ENCODE measurements at regions of chr20 and their contacts with region 1.

Region 1: DNA sequence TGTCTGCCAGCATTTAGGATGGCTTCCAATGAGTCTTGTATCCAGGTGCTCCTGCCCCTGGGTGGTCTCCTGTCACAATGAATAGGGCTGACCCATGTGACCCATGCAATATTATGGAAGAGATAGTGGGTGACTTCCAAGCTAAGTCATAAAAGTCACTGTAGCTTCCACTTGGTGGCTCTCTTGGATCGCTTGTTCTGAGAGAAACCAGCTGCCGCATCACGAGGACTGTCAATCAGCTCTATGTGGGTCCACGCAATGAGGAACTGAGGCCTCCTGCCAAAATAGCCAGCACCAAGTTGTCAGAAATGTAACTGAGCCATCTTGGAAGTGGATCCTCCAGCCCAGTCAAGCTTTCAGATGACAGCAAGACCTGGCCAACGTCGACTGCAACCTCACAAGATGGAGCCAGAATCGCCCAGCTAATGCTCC is 14.9 kb upstream of the MATN4 start:
- DNase-seq: peak; percentile 86
- ATAC-seq: peak; percentile 85
- H3K4me3 ChIP-seq: peak overlapping the region in 1 of 3 experiments; percentile 13; a peak in 1 of 6 replicates
- H3K27ac ChIP-seq: no peak overlapping the region
- H3K4me1 ChIP-seq: no peaks in the 10 kb centered on the region
- H3K27me3 ChIP-seq: peaks cover 2 to 7% of the 10 kb centered on the region in 2 experiments; a peak in 1 of 5 replicates
- CTCF ChIP-seq: peak; percentile 99
- EP300 ChIP-seq: no peak
- POLR2A ChIP-seq: no peak
- RAD21 ChIP-seq: peak; percentile 98

Region 2: DNA sequence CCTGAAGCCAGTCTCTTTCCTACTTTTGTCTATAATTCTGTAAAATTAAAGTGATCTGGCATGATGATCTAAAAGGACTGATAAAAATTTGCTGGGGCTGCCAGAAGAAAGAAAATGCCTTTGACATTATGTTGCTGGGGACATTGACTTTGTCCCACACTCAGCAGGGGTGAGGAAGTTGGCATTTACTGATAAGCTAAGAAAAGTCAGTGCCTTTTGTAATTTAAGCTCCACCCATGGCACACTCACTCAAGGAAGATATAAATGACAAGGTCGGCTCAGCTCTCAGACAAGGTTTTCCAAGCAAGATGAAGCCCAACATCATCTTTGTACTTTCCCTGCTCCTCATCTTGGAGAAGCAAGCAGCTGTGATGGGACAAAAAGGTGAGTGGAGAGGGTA is 116.2 kb before region 1 on chr20 and contains the start of gene SEMG1:
- CTCF ChIA-PET with region 1: no interaction called
- POLR2A ChIA-PET with region 1: no interaction called
- in situ Hi-C with region 1: no loop called
- intact Hi-C with region 1: no loop called
- DNase-seq: no peak
- ATAC-seq: no peak
- H3K4me3 ChIP-seq: no peak within 1 kb of the TSS
- H3K27ac ChIP-seq: no peak within 1 kb of the TSS
- H3K4me1 ChIP-seq: no peaks in the 10 kb centered on the region
- H3K27me3 ChIP-seq: 0 out of 5 replicates have a peak, but pooled peaks cover 0 to 6% of the 10 kb centered on the region in 2 experiments
- CTCF ChIP-seq: no peak
- EP300 ChIP-seq: no peak
- POLR2A ChIP-seq: no peak
- RAD21 ChIP-seq: no peak
- total RNA-seq, gene SEMG1: not detected in 2 replicates

Region 3: GRCh38 chr20:45347936-45348778 is 25.2 kb after region 1 on chr20 and contains the start of gene SDC4:
- CTCF ChIA-PET with region 1: no interaction called
- POLR2A ChIA-PET with region 1: interaction called, 74 read pairs
- in situ Hi-C with region 1: no loop called
- intact Hi-C with region 1: no loop called
- DNase-seq: no peak
- ATAC-seq: peak; percentile 55
- H3K4me3 ChIP-seq: peak within 1 kb of the TSS; percentile 79 to 87 (median 87)
- H3K27ac ChIP-seq: peak within 1 kb of the TSS; percentile 53
- H3K4me1 ChIP-seq: peaks cover 69% of the 10 kb centered on the region
- H3K27me3 ChIP-seq: peaks cover 1 to 11% of the 10 kb centered on the region in 2 experiments; a peak in 2 of 5 replicates
- CTCF ChIP-seq: no peak
- EP300 ChIP-seq: no peak
- POLR2A ChIP-seq: peak; percentile 96 to 99
- RAD21 ChIP-seq: peak; percentile 44; the same call in 1 of the 2 replicates
- total RNA-seq, gene SDC4: 36.0 and 65.1 TPM in 2 replicates

Region 4: DNA sequence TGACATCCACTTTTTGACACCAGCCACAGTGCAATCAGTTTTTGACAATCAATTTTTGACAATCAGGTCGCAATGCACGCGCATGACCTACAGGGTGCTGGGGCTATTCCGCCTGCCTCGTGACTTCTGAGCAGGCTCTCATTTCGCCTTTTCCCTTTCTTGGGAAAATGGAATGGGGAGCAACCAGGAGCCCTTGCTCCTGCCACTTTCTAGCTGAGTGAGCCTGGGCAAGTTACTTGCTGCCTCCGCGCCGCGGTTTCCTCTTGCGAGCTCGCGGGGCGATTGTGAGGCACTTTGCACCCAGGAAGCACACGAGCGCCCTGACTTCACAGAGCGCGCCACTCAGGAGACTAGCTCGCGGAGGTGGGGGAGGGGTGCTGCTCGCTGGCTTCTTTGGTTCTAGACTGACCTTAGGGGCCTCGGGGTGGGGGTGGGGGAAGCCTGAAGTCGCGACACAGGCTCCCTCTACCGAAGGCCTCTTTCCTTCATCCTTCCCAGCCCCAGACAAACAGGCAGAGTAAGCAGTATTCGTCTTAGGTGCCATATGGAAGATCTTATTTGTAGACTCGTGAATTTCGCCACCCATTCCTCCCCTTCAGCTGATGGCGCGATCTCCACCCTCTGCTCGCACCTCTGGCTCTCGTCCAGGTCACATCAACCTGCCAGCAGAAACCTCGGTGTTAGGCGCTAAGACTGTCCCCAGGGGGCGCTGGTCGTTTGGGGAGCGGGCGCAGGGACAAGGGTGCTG is 50.6 kb after region 1 on chr20:
- CTCF ChIA-PET with region 1: interaction called, 7 read pairs
- POLR2A ChIA-PET with region 1: interaction called, 10 read pairs
- in situ Hi-C with region 1: no loop called
- intact Hi-C with region 1: no loop called
- DNase-seq: peak; percentile 83
- ATAC-seq: peak; percentile 91
- H3K4me3 ChIP-seq: peak overlapping the region in 2 of 3 experiments; percentile 12 to 29; a peak in 2 of 6 replicates
- H3K27ac ChIP-seq: no peak overlapping the region
- H3K4me1 ChIP-seq: peaks cover 19% of the 10 kb centered on the region
- H3K27me3 ChIP-seq: no peaks in the 10 kb centered on the region
- CTCF ChIP-seq: peak; percentile 98
- EP300 ChIP-seq: no peak
- POLR2A ChIP-seq: no peak
- RAD21 ChIP-seq: peak; percentile 92

Region 5: DNA sequence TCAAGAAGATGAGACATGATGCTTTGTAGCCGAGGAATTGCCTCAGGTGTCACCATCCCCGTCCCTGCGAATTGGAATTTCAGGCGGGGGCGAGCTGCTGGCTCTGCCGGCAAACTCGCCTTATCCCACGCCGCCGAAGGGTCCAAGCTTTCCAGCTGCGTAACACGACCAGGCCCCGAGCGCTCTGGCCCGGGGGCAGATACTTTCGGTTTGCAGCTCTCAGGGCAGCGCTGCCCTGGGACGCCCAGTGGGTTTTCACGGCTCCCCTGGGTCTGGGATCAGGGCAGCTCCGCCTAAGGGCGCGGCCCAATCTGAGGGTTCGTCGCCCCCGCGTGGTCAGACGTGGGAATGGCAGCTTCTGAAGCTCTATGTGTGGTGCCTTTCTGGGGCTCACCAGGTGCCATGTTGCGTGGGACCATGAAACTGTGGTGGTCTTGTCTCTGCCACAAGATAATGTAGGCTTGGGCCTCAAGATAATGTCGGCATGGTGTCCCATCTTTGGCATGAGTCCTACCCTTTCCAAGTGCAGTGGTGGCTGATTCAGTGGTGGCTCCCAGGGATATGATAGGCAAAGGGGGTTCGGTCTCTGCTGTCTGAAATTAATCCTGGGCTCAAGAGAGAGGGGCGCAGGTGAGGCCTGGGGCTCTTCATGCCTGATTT is 113.9 kb after region 1 on chr20:
- CTCF ChIA-PET with region 1: interaction called, 96 read pairs
- POLR2A ChIA-PET with region 1: interaction called, 57 read pairs
- in situ Hi-C with region 1: loop called (anchors 5 kb)
- intact Hi-C with region 1: loop called (anchors 1 kb)
- DNase-seq: peak; percentile 85
- ATAC-seq: peak; percentile 99
- H3K4me3 ChIP-seq: peak overlapping the region; percentile 68 to 82 (median 77)
- H3K27ac ChIP-seq: no peak overlapping the region
- H3K4me1 ChIP-seq: peaks cover 6% of the 10 kb centered on the region; the same call in 1 of the 2 replicates
- H3K27me3 ChIP-seq: no peaks in the 10 kb centered on the region
- CTCF ChIP-seq: peak; percentile 100
- EP300 ChIP-seq: peak in 1 of 2 experiments; percentile 8; a peak in 1 of 4 replicates
- POLR2A ChIP-seq: peak in 1 of 2 experiments; percentile 57; a peak in 2 of 4 replicates
- RAD21 ChIP-seq: peak; percentile 100

Region 6: GRCh38 chr20:45487231-45487635 is 164.3 kb after region 1 on chr20:
- CTCF ChIA-PET with region 1: interaction called, 10 read pairs
- POLR2A ChIA-PET with region 1: no interaction called
- in situ Hi-C with region 1: no loop called
- intact Hi-C with region 1: no loop called
- DNase-seq: no peak
- ATAC-seq: peak; percentile 75
- H3K4me3 ChIP-seq: no peak overlapping the region
- H3K27ac ChIP-seq: no peak overlapping the region
- H3K4me1 ChIP-seq: no peaks in the 10 kb centered on the region
- H3K27me3 ChIP-seq: peaks cover 7 to 26% of the 10 kb centered on the region in 2 experiments
- CTCF ChIP-seq: no peak
- EP300 ChIP-seq: no peak
- POLR2A ChIP-seq: no peak
- RAD21 ChIP-seq: no peak

Measured in HepG2 (cell line).